ENCODE measurements at regions of chr1 and their contacts with region 1.

Region 1: GRCh38 chr1:205658943-205659581 is 21.2 kb downstream of the SLC45A3 start:
- DNase-seq: peak; percentile 79
- H3K4me3 Mint-ChIP-seq: no peak overlapping the region
- H3K27ac Mint-ChIP-seq: no peak overlapping the region
- H3K4me1 Mint-ChIP-seq: peaks cover 4% of the 10 kb centered on the region
- H3K27me3 Mint-ChIP-seq: peaks cover 3% of the 10 kb centered on the region

Region 2: DNA sequence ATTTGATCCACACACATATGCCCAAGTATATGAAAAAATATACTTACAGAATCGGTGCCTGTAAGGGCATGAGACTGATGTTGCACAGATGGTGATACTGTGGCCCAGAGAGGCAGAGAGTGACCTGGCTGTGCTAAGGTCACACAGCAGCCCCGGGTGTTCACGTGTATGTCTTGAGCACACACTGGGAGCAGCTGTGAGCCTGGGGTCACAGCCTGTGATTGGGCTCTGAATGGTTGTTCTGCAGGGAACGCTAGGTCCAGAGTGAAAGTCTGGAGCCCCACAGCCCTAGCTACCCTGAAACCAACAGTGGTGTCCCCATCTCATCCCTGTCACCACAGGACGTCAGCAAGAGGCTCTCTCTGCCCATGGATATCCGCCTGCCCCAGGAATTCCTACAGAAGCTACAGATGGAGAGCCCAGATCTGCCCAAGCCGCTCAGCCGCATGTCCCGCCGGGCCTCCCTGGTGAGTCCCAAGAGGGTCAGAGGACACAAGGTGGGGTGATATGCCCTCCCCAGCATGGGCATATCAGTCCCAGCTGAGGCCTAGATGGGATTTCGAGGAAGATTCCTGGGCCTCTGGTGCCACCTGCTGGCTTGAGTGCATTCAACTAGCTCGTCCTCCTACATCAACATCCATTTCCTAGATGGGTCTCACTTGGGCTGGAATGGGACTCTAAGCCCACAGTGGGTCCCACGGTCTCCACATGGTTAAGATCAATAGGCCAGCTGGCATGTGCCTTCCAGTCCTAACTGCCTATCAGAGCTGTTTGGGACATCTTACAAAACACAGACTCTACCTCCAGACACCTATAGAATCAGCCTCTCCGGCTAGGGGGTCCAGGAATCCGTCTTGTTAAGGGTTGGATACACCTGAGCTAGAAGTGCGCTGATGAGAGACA is 134.9 kb before region 1 on chr1:
- CTCF ChIA-PET with region 1: interaction called, 66 read pairs
- POLR2A ChIA-PET with region 1: no interaction called
- DNase-seq: peak; percentile 76
- H3K4me3 Mint-ChIP-seq: no peak overlapping the region
- H3K27ac Mint-ChIP-seq: no peak overlapping the region
- H3K4me1 Mint-ChIP-seq: no peaks in the 10 kb centered on the region
- H3K27me3 Mint-ChIP-seq: no peaks in the 10 kb centered on the region

Region 3: DNA sequence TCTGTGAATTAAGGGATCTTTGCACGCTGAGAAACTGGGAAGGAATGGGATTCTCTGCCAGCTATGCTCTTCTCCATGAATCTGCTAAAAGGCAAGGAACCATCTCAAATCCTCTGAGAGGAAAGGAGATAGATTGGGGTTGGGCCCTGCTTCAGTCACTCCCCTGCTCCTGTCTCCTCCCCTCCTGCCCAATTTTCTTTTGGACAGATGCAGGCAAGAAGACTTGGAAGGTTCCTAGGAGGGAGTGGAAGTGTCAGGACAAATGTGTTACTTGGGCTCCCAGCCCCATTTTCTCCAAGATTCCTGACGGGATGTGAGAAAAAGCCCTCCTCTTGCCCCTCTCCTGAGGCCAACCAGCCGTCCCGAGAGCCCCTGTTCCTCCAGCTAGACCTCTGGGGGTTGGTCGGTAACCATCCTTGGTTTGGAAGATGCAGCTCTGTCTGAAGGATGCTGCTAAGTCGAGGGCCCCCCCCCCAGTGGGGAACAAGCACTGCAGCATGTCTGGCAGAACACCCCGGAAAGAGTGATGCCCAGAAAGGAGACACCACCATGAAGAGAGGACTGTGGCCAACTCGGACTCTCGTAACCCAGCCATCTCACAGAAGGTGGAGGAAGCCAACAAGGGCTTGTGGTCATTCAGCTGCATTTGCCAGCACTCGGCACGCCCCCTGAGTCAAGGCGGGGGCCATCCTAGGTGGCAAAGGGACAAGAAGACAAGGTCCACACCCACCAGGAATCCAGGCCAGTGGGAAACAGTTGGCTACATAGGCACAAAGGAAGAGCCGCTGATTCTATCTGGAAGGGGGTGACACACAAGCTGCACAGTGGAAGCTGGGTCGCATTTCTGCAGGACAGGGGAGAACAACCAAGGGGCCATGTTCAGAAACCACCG is 110.9 kb before region 1 on chr1:
- CTCF ChIA-PET with region 1: no interaction called
- POLR2A ChIA-PET with region 1: no interaction called
- DNase-seq: peak; percentile 11
- H3K4me3 Mint-ChIP-seq: no peak overlapping the region
- H3K27ac Mint-ChIP-seq: no peak overlapping the region
- H3K4me1 Mint-ChIP-seq: peaks cover 9% of the 10 kb centered on the region
- H3K27me3 Mint-ChIP-seq: peaks cover 42% of the 10 kb centered on the region

Region 4: GRCh38 chr1:205600085-205600484 is 59.0 kb before region 1 on chr1:
- CTCF ChIA-PET with region 1: interaction called, 366 read pairs
- POLR2A ChIA-PET with region 1: no interaction called
- DNase-seq: no peak
- H3K4me3 Mint-ChIP-seq: no peak overlapping the region
- H3K27ac Mint-ChIP-seq: peak overlapping the region; percentile 41
- H3K4me1 Mint-ChIP-seq: peaks cover 32% of the 10 kb centered on the region
- H3K27me3 Mint-ChIP-seq: no peaks in the 10 kb centered on the region

Region 5: DNA sequence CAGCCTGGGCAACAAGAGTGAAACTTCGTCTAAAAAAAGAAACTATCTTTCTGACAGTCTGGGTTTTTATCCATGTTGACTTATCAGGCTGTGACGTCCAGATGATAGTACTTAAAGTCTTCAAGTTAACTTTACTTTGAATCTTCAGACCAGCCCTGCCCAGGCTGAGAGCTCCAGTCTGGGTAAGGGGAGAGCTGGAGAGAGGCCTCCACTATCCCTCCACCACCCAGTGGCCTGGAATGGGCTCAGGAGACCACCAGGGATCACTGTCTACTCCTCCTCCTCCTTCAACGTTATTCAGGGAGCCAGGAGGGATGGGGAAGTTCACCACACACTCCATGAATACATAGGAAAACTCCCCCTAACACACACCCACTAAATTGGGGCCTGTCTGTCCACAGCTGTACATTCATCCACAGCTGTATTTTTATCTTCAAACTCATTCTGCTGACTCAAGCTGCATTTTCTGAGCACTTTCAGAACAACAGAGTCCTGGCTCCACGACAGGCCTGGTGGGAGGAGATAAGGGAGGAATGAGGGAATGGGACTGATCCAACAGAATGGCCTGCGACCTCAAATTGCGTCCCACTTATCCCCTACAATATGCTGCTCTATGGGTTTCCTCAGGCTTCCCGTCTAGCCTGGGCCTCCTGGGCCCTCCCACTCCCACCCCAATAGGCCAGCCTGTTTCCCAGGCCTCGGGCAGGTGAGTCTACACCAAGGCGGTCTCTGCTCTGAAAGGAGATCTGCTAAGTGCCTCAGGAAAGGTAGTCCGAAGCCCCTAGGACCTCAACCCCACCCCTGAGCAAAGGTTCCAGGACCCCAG is 19.4 kb after region 1 on chr1:
- CTCF ChIA-PET with region 1: interaction called, 23 read pairs
- POLR2A ChIA-PET with region 1: interaction called, 3 read pairs
- DNase-seq: no peak
- H3K4me3 Mint-ChIP-seq: peak overlapping the region; percentile 74
- H3K27ac Mint-ChIP-seq: no peak overlapping the region
- H3K4me1 Mint-ChIP-seq: peaks cover 13% of the 10 kb centered on the region
- H3K27me3 Mint-ChIP-seq: peaks cover 14% of the 10 kb centered on the region

Region 6: GRCh38 chr1:205775015-205775716 is 116.1 kb after region 1 on chr1 and contains the start of gene RAB29:
- CTCF ChIA-PET with region 1: interaction called, 23 read pairs
- POLR2A ChIA-PET with region 1: interaction called, 5 read pairs
- DNase-seq: peak; percentile 92
- H3K4me3 Mint-ChIP-seq: peak within 1 kb of the TSS; percentile 90
- H3K27ac Mint-ChIP-seq: peak within 1 kb of the TSS; percentile 87
- H3K4me1 Mint-ChIP-seq: peaks cover 57% of the 10 kb centered on the region
- H3K27me3 Mint-ChIP-seq: no peaks in the 10 kb centered on the region
- total RNA-seq, gene RAB29: 67.6 to 72.3 TPM

Region 7: DNA sequence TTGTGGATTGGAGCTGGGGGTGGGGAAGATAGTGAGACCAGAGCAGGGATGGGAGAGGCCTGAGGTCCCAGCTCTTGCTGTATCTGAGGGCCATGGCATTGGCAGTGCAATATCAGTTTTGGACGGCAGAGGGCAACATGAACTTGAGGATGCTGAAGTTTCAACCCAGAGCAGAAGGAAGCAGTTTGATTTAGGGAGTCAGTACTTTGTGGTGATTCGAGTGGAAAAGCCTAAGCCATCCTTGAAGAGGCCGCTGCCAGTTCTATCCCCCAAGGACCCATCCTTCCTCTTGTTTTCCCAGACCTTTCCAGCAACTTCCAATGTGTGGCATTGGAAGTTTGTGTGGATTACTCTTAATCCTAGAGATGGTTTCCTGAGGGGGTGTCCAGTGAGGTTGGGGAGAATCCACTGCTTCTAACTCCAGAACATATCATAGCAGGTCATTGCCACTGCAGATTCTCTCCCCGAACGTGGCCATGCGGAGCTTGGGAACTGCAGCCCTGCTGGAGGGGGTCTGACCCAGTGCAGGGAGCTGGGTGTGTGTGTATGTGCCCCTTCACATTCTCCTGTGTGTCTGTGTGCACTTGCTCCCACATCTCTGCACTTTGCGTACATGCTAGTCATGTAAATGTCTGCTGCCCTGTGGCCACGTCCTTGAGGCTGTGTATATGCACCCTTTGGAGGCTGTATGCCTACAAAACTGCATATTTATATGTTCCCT is 260.1 kb after region 1 on chr1:
- CTCF ChIA-PET with region 1: interaction called, 13 read pairs
- POLR2A ChIA-PET with region 1: no interaction called
- DNase-seq: peak; percentile 75
- H3K4me3 Mint-ChIP-seq: no peak overlapping the region
- H3K27ac Mint-ChIP-seq: no peak overlapping the region
- H3K4me1 Mint-ChIP-seq: no peaks in the 10 kb centered on the region
- H3K27me3 Mint-ChIP-seq: peaks cover 1% of the 10 kb centered on the region